ENCODE measurements at regions of chr9 and their contacts with region 1.

Region 1: GRCh38 chr9:17057729-17058128 is 77.1 kb upstream of the CNTLN start:
- DNase-seq: no peak
- H3K4me3 ChIP-seq: no peak overlapping the region
- H3K27ac ChIP-seq: no peak overlapping the region
- H3K4me1 ChIP-seq: no peaks in the 10 kb centered on the region
- H3K27me3 ChIP-seq: no peaks in the 10 kb centered on the region
- CTCF ChIP-seq: no peak
- POLR2A ChIP-seq: no peak

Region 2: DNA sequence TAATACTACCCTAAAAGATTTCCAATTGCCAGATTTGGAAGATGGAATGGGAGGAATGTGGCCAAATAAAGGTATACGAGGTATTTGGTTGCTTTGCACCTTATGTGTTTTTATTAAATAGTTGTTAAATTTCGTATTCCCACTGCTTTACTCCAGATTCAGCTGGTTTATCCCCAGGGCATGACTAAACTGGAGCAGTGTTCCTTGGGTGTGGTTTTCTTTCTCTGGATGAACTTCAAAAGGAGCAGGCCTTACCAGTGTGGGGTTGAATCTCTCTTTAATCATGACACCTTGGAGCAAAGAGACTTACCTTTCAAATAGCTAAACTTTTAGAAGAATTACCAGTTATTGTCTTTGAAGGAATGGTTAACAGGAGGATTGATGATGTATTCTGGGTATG is 65.6 kb before region 1 on chr9:
- CTCF ChIA-PET with region 1: no interaction called
- POLR2A ChIA-PET with region 1: no interaction called
- dilution Hi-C with region 1: no loop called
- intact Hi-C with region 1: no loop called
- DNase-seq: no peak
- H3K4me3 ChIP-seq: no peak overlapping the region
- H3K27ac ChIP-seq: no peak overlapping the region
- H3K4me1 ChIP-seq: no peaks in the 10 kb centered on the region
- H3K27me3 ChIP-seq: no peaks in the 10 kb centered on the region
- CTCF ChIP-seq: no peak
- POLR2A ChIP-seq: no peak

Region 3: GRCh38 chr9:17075758-17076485 is 18.2 kb after region 1 on chr9:
- CTCF ChIA-PET with region 1: interaction called, 6 read pairs
- POLR2A ChIA-PET with region 1: no interaction called
- dilution Hi-C with region 1: no loop called
- intact Hi-C with region 1: loop called (anchors 1 kb)
- DNase-seq: no peak
- H3K4me3 ChIP-seq: no peak overlapping the region
- H3K27ac ChIP-seq: no peak overlapping the region
- H3K4me1 ChIP-seq: no peaks in the 10 kb centered on the region
- H3K27me3 ChIP-seq: no peaks in the 10 kb centered on the region
- CTCF ChIP-seq: no peak
- POLR2A ChIP-seq: no peak

Region 4: GRCh38 chr9:17783227-17783626 is 725.5 kb after region 1 on chr9:
- CTCF ChIA-PET with region 1: no interaction called
- POLR2A ChIA-PET with region 1: no interaction called
- dilution Hi-C with region 1: no loop called
- intact Hi-C with region 1: no loop called
- DNase-seq: no peak
- H3K4me3 ChIP-seq: no peak overlapping the region
- H3K27ac ChIP-seq: no peak overlapping the region
- H3K4me1 ChIP-seq: no peaks in the 10 kb centered on the region
- H3K27me3 ChIP-seq: peaks cover 2% of the 10 kb centered on the region in 2 experiments
- CTCF ChIP-seq: no peak
- POLR2A ChIP-seq: no peak